Right ventricle myocardium inferior (tissue), 1 donor: ENCODE measurements at regions of chr7 and their contacts with region 1.

Region 1: GRCh38 chr7:114085592-114086501 is 167.0 kb upstream of the PPP1R3A start:
- DNase-seq: peak; percentile 88
- ATAC-seq: peak; percentile 90

Region 2: GRCh38 chr7:113810080-113810744 is 275.6 kb before region 1 on chr7:
- intact Hi-C with region 1: no loop called
- DNase-seq: no peak
- ATAC-seq: no peak

Region 3: DNA sequence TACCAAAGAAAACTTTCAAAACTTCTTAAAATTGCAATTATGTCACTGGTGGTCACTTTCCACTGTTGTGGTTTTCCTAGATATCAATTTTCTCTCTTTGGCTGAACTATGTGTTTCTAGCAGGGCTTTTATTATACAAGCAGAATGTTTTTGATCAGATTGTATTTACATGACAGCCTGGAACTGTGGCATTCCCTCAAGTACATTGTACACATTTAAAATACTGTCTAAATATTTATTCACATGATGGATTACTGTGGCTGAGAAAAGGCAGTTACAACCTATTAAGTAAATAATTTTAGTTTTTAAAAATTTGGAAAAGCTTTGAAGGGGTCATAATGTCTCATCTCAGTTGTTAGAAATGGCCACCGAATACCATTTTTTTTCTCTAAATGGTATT is 64.8 kb after region 1 on chr7:
- intact Hi-C with region 1: no loop called
- DNase-seq: no peak
- ATAC-seq: no peak

Region 4: GRCh38 chr7:114414156-114415063 is 328.6 kb after region 1 on chr7 and contains the start of gene FOXP2:
- intact Hi-C with region 1: loop called (anchors 5 kb)
- DNase-seq: peak; percentile 37
- ATAC-seq: peak; percentile 47
- total RNA-seq, gene FOXP2: 2.4 TPM

Region 5: GRCh38 chr7:114530074-114530611 is 444.3 kb after region 1 on chr7:
- intact Hi-C with region 1: loop called (anchors 5 kb)
- DNase-seq: no peak
- ATAC-seq: no peak